Activated naive CD4-positive, alpha-beta T cell treated with anti-CD3 and anti-CD28 coated beads for 36 hours (primary cell): ENCODE measurements at regions of chr10 and their contacts with region 1.

Region 1: GRCh38 chr10:48306265-48306869 is at the start of gene MAPK8:
- DNase-seq: peak; percentile 90
- H3K4me3 Mint-ChIP-seq: peak within 1 kb of the TSS; percentile 80
- H3K27ac Mint-ChIP-seq: peak within 1 kb of the TSS; percentile 58
- H3K4me1 Mint-ChIP-seq: peaks cover 30% of the 10 kb centered on the region
- H3K27me3 Mint-ChIP-seq: no peaks in the 10 kb centered on the region
- total RNA-seq, gene MAPK8: 29.7 to 36.2 TPM

Region 2: DNA sequence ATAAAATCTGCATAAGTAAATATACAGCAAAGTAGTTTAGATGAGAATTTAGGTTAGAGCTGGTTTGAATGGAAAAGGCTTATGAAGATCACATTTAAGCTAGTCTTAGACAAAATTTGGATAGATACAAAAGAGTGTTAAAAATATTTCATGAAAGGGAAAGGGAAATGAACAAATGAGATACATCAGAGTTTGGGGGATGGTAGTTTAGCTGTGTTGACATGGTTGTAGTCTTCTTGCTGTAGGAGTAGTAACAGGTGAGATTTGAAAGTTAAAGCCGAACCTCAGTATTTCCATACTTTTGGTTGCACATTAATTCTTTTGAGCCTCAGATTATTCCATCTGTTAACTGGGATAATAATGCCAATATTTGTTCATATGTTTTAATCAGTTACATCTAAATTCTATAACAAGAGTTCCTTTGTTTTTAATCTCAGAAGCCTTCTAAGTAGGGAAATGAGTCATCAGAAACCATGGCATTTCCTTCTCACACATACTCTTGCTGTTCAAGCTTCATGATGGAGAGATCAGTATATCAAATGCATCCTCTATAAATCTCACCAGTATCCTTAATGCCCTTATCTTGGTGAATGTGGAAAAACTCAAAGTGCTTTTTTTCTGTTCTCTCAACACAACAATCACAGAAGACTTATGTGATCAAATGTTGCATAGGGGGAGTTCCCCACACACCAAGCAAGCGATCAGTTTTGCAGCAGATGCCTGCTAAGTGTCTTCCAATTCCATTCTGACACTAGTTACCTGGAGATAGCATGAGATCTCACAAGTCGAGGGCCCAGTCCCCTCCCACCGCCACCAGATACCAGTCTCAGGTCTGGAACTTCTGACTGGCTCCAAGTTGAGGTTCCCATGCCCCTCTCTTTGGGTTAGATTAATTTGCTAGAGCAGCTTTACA is 84.8 kb after region 1 on chr10:
- CTCF ChIA-PET with region 1: no interaction called
- intact Hi-C with region 1: loop called (anchors 1 kb)
- DNase-seq: peak; percentile 15
- H3K4me3 Mint-ChIP-seq: no peak overlapping the region
- H3K27ac Mint-ChIP-seq: no peak overlapping the region
- H3K4me1 Mint-ChIP-seq: peaks cover 53% of the 10 kb centered on the region
- H3K27me3 Mint-ChIP-seq: no peaks in the 10 kb centered on the region

Region 3: GRCh38 chr10:48523820-48524758 is 217.7 kb after region 1 on chr10:
- CTCF ChIA-PET with region 1: no interaction called
- intact Hi-C with region 1: loop called (anchors 5 kb)
- DNase-seq: peak; percentile 16
- H3K4me3 Mint-ChIP-seq: no peak overlapping the region
- H3K27ac Mint-ChIP-seq: no peak overlapping the region
- H3K4me1 Mint-ChIP-seq: no peaks in the 10 kb centered on the region
- H3K27me3 Mint-ChIP-seq: peaks cover 48% of the 10 kb centered on the region

Region 4: DNA sequence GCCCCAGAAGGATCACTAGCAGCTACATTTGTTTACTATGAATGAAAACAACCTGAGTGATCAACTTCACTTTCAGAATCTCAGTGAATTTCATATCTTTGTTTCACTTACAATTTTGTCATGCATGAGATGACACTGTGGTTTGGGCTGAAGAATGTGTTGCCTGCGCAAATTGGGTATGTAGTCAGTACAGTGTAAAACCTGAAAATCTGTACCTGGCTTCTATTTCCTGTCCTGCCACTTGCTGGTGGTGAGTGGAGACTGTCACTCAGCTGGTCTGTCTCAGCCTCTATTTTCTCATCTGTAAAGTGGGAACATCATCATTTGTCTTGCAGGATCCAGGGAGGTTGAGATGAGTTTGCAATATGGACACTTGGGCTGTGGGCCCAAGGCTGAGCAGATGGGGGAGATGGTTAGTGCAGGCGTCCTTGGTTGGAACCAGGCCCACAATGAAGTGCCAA is 496.3 kb after region 1 on chr10:
- CTCF ChIA-PET with region 1: no interaction called
- intact Hi-C with region 1: loop called (anchors 5 kb)
- DNase-seq: peak; percentile 28
- H3K4me3 Mint-ChIP-seq: no peak overlapping the region
- H3K27ac Mint-ChIP-seq: no peak overlapping the region
- H3K4me1 Mint-ChIP-seq: peaks cover 71% of the 10 kb centered on the region
- H3K27me3 Mint-ChIP-seq: no peaks in the 10 kb centered on the region

Region 5: DNA sequence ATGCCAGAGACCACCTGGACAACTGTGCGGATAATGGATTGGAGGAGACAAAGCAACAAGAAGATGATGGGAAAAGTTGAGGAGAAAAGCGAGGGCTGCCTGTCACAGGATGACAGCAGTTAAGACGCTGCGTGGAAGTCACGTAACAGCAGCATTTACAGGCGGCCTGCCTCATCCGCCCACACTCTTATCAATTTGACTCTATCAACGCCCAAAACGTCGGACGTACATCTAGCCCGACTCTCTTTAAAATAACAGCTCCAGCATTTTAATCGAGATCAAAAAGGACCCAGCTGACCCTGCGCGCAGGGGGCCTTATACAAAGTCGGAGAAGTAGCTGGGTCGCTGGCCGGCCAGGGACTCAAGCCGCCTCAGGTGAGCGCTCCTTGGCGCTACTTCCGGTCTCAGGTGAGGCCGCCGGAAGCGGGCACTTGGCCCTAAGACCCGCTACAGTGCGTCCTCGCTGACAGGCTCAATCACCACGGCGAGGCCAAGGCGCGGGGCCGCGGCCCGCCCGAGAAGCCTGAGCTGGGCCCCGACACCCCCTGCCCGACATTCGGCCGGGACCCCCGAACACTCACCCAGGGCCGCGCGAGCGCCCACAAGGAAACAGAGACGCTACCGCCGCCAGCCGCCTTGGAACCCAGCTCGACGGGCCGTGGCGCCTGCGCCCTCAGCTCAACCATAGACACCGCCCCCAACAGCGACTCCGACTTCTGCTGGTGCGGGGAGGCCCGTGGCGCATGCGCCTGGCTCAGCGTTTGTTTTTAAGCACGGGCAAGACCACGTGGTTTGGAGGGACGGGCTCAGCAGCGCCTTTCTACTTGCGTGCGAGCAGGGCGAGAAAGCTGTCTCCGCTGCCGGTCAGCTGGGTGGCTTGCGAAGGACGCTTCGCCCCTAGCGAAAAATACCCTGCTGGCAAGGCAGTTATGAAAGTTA is 1232.3 kb after region 1 on chr10 and contains the start of gene ERCC6:
- CTCF ChIA-PET with region 1: no interaction called
- intact Hi-C with region 1: loop called (anchors 2 kb)
- DNase-seq: peak; percentile 97
- H3K4me3 Mint-ChIP-seq: peak within 1 kb of the TSS; percentile 90
- H3K27ac Mint-ChIP-seq: peak within 1 kb of the TSS; percentile 92
- H3K4me1 Mint-ChIP-seq: peaks cover 34% of the 10 kb centered on the region
- H3K27me3 Mint-ChIP-seq: peaks cover 14% of the 10 kb centered on the region
- total RNA-seq, gene ERCC6: 14.2 to 16.2 TPM